ENCODE measurements at regions of chr10 and their contacts with region 1.

Region 1: DNA sequence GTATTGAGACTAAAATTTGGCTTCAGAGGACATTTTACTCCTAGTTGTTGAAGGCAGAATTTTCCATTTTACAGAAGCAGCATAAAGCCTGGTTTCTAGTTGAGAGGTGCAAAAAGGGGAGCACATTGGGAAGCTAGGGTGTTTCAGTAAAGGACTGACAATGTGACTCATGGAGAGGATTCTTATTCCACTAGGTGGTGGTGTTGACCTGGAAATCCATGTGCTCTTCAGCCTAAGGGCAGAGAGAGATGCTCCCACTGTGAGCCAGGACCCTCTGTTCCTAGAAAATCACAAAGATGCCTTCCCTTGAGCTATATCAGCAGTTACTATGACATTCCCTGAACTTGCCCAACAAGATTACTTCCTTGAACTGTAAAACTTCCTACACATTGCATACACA is 687.8 kb downstream of the IPMK start:
- DNase-seq: peak; percentile 61
- H3K4me3 Mint-ChIP-seq: no peak overlapping the region
- H3K27ac Mint-ChIP-seq: no peak overlapping the region
- H3K4me1 Mint-ChIP-seq: no peaks in the 10 kb centered on the region
- H3K27me3 Mint-ChIP-seq: no peaks in the 10 kb centered on the region
- CTCF ChIP-seq: peak; percentile 65

Region 2: GRCh38 chr10:57338823-57339558 is 240.9 kb before region 1 on chr10:
- CTCF ChIA-PET with region 1: interaction called, 7 read pairs
- POLR2A ChIA-PET with region 1: no interaction called
- intact Hi-C with region 1: loop called (anchors 5 kb)
- DNase-seq: peak; percentile 56
- H3K4me3 Mint-ChIP-seq: no peak overlapping the region
- H3K27ac Mint-ChIP-seq: no peak overlapping the region
- H3K4me1 Mint-ChIP-seq: no peaks in the 10 kb centered on the region
- H3K27me3 Mint-ChIP-seq: peaks cover 6% of the 10 kb centered on the region
- CTCF ChIP-seq: peak; percentile 55

Region 3: DNA sequence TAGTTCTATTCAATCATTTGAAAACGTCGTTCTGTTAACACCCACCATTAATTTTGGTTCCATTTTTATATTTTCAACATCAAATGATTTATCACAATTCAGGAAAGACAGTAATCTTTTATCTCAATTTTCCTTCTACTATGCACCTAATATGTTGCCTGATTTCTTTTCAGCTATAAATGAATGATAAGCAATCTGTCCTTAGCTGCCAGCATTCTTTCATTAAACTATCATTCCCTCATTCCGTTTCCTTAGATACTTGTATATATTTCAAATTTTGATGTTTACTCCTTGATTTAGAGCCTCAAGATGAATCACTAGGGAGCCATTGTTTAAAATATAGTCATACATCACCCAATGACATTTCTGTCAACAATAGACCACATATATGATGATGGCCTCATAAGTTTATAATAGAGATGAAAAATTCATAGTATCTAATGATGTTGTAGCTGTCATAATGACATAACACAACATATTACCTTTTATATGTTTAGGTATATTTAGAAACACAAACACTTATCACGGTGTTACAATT is 26.1 kb after region 1 on chr10:
- CTCF ChIA-PET with region 1: interaction called, 17 read pairs
- POLR2A ChIA-PET with region 1: no interaction called
- intact Hi-C with region 1: no loop called
- DNase-seq: no peak
- H3K4me3 Mint-ChIP-seq: no peak overlapping the region
- H3K27ac Mint-ChIP-seq: no peak overlapping the region
- H3K4me1 Mint-ChIP-seq: no peaks in the 10 kb centered on the region
- H3K27me3 Mint-ChIP-seq: no peaks in the 10 kb centered on the region
- CTCF ChIP-seq: no peak

Region 4: GRCh38 chr10:57657164-57657765 is 77.3 kb after region 1 on chr10:
- CTCF ChIA-PET with region 1: interaction called, 215 read pairs
- POLR2A ChIA-PET with region 1: interaction called, 4 read pairs
- intact Hi-C with region 1: loop called (anchors 1 kb)
- DNase-seq: peak; percentile 73
- H3K4me3 Mint-ChIP-seq: no peak overlapping the region
- H3K27ac Mint-ChIP-seq: no peak overlapping the region
- H3K4me1 Mint-ChIP-seq: no peaks in the 10 kb centered on the region
- H3K27me3 Mint-ChIP-seq: no peaks in the 10 kb centered on the region
- CTCF ChIP-seq: peak; percentile 88

Region 5: GRCh38 chr10:57849691-57850357 is 269.9 kb after region 1 on chr10:
- CTCF ChIA-PET with region 1: interaction called, 24 read pairs
- POLR2A ChIA-PET with region 1: no interaction called
- intact Hi-C with region 1: loop called (anchors 1 kb)
- DNase-seq: peak; percentile 38
- H3K4me3 Mint-ChIP-seq: no peak overlapping the region
- H3K27ac Mint-ChIP-seq: no peak overlapping the region
- H3K4me1 Mint-ChIP-seq: peaks cover 5% of the 10 kb centered on the region
- H3K27me3 Mint-ChIP-seq: no peaks in the 10 kb centered on the region
- CTCF ChIP-seq: peak; percentile 58

Region 6: GRCh38 chr10:58152673-58153263 is 572.8 kb after region 1 on chr10:
- CTCF ChIA-PET with region 1: interaction called, 19 read pairs
- POLR2A ChIA-PET with region 1: no interaction called
- intact Hi-C with region 1: loop called (anchors 1 kb)
- DNase-seq: peak; percentile 80
- H3K4me3 Mint-ChIP-seq: no peak overlapping the region
- H3K27ac Mint-ChIP-seq: no peak overlapping the region
- H3K4me1 Mint-ChIP-seq: peaks cover 16% of the 10 kb centered on the region
- H3K27me3 Mint-ChIP-seq: no peaks in the 10 kb centered on the region
- CTCF ChIP-seq: peak; percentile 52